Dendritic cell treated with granulocyte-macrophage colony-stimulating factor and Interleukin-4, amounts not matched to agents 40 ng/mL and 50 ng/mL, for 4 days (primary cell): ENCODE measurements at regions of chr11 and their contacts with region 1.

Region 1: DNA sequence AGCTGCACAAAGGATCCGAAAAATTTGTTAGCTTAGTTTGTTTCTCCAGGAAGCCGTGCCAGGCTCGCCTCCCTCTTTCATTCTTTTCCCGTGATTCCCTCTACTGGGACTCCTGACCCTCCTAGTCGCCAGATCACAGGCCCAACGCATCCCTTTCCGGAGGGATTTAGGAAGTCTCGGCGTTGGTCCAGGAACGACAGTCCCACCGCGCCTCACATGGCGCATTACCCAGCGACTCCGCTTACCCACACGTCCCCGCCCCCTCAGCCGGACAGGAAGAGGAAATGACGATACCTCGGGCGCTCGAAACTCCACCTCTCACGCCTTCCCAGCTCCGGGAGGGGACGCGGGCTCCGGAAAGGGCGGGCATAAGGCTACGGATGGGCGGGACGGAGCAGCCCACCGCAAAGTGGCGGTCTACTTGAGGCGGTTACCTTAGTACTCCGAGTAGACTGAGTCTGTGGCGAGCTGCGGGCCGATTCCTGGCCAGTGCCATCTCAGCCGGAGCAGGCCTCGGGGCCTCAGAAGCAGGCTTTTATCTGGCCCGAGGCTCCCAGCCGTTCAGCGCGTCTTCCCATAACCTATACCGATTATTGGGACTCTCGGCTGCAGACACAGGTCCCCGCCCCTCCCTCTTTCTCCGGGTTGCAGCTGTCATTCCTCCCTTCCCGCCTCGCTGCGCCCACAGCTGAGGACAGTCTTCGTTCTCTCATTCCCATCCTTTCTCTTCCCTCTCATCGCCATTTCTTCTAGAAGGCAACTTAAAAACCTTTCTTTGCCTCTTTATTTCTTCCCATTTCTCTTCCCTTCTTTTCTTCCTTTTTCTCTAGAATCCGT is at the start of gene CCDC15:
- H3K4me3 Mint-ChIP-seq: no peak within 1 kb of the TSS
- H3K27ac Mint-ChIP-seq: no peak within 1 kb of the TSS
- H3K4me1 Mint-ChIP-seq: no peaks in the 10 kb centered on the region
- H3K27me3 Mint-ChIP-seq: peaks cover 2% of the 10 kb centered on the region

Region 2: DNA sequence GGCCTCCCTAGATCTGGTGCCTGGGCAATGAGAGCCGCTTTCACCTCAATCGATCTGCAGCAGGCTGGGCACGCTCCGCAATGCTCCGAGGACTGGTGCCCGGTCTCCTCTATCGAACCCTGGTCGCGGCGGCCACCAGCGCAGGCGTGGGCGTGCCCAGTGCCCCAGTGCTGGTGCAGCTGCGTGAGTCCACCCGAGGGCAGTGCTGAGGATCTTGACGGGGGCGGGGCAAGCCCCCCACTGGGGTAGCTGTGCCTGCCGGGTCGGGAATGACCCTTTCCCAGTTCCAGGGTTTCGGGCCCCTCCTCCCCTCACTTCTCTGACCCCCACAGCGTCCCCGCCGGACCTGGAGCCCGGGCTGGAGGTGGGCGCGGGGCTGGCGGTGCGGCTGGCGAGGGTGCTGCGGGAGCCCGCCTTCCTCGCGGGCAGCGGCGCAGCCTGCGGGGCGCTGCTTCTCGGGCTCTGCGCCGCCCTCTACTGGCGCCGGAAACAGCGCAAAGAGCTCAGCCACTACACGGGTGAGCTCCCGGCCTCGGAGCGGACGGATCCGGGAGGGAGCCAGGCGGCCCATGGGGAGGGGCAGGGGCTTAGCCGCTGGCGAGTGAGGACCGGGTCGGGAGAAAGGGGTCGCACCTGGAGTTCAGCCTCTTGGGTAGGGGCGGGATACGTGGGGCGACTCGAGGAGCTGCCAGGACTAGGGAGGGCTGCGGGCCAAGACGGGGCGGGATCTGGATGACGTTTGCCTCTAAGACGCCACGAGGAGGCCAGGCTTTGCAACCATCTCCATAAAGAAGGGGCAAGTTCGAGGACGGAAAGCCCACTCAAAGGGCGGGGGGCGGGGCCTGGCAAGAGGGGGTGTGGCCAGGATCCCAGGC is 77.8 kb before region 1 on chr11:
- intact Hi-C with region 1: loop called (anchors 5 kb)
- H3K4me3 Mint-ChIP-seq: peak overlapping the region; percentile 86
- H3K27ac Mint-ChIP-seq: peak overlapping the region; percentile 90
- H3K4me1 Mint-ChIP-seq: peaks cover 57% of the 10 kb centered on the region
- H3K27me3 Mint-ChIP-seq: peaks cover 69% of the 10 kb centered on the region

Region 3: DNA sequence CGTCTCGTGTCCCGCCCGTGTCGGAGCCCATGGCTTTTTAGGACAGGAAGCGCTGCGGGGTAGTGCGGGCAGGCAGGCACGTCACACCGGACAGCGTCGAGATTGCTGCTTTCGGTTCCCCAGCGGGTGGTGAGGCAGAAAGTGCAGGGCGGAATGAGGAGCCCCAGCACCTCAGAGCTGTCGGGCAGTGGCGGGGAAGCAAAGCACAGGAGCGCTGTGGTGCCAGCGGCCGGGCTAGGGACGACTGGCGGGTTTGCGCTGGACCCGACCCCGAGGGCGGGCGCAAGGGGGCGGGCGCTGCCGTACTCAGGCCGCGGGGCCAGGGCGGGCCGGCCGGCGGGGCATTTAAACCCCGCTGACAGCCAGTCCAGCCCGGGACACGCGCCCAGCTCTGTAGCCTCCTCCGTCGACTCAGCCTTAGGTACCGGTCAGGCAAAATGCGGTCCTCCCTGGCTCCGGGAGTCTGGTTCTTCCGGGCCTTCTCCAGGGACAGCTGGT is 109.0 kb after region 1 on chr11 and contains the start of gene SLC37A2:
- intact Hi-C with region 1: loop called (anchors 1 kb)
- H3K4me3 Mint-ChIP-seq: peak within 1 kb of the TSS; percentile 87
- H3K27ac Mint-ChIP-seq: peak within 1 kb of the TSS; percentile 96
- H3K4me1 Mint-ChIP-seq: peaks cover 37% of the 10 kb centered on the region
- H3K27me3 Mint-ChIP-seq: no peaks in the 10 kb centered on the region

Region 4: DNA sequence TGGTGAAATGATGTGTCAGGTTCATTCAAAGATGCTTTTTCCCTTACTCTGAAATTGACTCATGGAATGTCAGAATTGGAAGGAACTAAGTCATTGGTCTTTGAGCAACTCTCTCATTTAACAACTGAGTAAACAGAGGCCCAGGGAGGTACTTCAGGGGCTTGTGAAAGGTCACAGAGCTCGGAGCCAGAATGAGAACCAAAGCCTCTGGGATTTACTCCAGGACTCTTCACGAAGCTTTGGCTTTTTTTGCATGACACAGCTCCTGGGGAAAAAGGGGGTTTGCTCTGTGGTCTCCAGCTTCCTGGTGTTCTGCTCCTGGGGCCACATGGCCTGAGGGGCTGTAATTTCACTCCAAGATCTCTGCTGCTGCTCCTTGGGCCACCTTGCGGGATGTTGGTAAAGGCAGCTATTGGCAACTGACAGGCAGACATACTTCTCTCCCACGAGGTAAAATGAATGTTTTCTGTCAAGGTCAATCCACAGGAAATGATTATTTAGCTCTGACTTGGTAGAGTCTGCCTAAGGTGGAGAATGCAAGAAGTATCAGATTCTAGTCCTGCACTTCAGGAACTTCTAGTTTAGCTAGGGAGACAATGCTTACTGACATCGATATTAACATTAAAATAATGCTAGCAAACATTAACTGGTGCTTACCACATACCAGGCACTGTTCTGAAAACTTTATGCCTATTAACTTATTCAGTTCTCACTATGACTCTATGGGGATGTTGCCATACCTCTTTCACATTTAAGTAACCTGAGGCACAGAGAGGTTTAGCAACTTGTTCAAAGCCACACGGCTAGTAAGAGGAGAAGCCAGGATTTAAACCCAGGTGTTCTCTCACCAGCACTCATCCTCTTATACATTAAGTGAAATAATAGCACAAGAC is 226.7 kb after region 1 on chr11:
- intact Hi-C with region 1: no loop called
- H3K4me3 Mint-ChIP-seq: no peak overlapping the region
- H3K27ac Mint-ChIP-seq: no peak overlapping the region
- H3K4me1 Mint-ChIP-seq: no peaks in the 10 kb centered on the region
- H3K27me3 Mint-ChIP-seq: peaks cover 34% of the 10 kb centered on the region

Region 5: GRCh38 chr11:125887373-125888324 is 933.7 kb after region 1 on chr11 and contains the start of gene HYLS1:
- intact Hi-C with region 1: loop called (anchors 10 kb)
- H3K4me3 Mint-ChIP-seq: peak within 1 kb of the TSS; percentile 85
- H3K27ac Mint-ChIP-seq: peak within 1 kb of the TSS; percentile 91
- H3K4me1 Mint-ChIP-seq: peaks cover 21% of the 10 kb centered on the region
- H3K27me3 Mint-ChIP-seq: peaks cover 3% of the 10 kb centered on the region